GM12878 (cell line): ENCODE measurements at regions of chr18 and their contacts with region 1.

Region 1: DNA sequence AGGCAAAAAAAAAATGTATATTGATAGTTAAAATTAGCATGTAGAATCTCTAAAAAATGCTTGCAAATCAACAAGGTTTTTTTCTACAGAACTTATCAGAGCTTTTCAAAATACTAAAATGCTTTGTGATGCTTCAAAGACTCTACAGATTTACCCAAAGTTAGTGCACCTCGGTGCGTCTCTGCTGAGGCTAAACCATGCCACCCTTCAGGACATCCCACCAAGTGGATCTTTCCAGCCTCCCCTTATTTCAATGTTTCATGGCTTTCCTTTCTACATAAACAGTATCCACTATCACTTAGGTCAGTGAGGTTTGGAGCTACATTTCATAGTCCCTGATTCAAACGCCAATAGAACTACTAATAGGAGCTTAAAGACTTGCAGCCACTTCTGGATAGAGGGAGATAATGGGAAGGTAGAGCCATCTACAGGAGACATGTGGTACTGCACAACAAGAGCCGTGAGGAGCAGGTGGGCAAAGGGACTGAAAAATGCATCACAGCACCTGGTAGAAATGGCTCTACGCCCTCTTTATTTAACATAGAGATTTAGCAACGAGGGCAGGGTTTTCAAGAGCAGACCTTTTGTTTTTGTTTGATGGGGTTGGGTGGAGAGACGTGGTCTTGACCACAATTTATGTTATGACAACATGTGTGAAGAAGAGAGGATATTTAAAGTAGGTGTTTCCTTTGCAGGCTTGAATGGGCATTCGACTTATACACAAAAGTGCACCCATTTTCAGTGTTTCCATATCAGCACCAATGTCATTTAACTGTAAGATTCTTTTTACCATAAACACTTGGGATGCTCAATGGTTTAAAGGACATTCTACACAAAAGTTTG is 56.1 kb upstream of the SLC35G4 start:
- DNase-seq: no peak
- ATAC-seq: peak; percentile 90
- H3K4me3 ChIP-seq: no peak overlapping the region
- H3K27ac ChIP-seq: no peak overlapping the region
- H3K4me1 ChIP-seq: no peaks in the 10 kb centered on the region
- H3K27me3 ChIP-seq: peaks cover 2 to 3% of the 10 kb centered on the region in 2 experiments; a peak in 3 of 4 replicates
- CTCF ChIP-seq: peak; percentile 83 to 91 (median 91)
- EP300 ChIP-seq: no peak
- POLR2A ChIP-seq: no peak
- RAD21 ChIP-seq: peak; percentile 87

Region 2: DNA sequence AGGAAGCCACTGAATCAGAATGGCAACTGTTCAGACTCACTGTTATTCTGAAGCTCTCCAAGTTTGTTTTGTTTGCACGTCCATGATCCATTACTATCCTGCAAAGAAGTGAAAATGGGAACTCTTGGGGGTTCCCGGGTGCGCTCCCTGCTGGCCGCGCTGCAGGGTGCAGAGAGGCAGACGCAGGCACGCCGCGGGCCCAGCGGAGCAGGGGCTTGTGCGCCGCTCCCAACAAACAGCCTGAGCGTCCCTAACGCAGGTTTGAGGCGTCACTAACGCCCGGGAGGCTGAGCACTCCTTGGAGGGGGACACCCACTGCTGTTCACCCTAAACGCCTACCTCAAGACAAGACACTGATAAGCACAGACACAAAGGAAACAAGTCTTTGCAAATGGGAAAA is 389.7 kb before region 1 on chr18:
- CTCF ChIA-PET with region 1: interaction called, 6 read pairs
- POLR2A ChIA-PET with region 1: no interaction called
- RAD21 ChIA-PET with region 1: interaction called, 3 read pairs
- SMC1A ChIA-PET with region 1: interaction called, 5 read pairs
- in situ Hi-C with region 1: no loop called
- intact Hi-C with region 1: loop called (anchors 5 kb)
- DNase-seq: no peak
- ATAC-seq: peak; percentile 94
- H3K4me3 ChIP-seq: no peak overlapping the region
- H3K27ac ChIP-seq: no peak overlapping the region
- H3K4me1 ChIP-seq: peaks cover 9% of the 10 kb centered on the region
- H3K27me3 ChIP-seq: no peaks in the 10 kb centered on the region
- CTCF ChIP-seq: peak; percentile 61 to 88 (median 62)
- EP300 ChIP-seq: no peak
- POLR2A ChIP-seq: no peak
- RAD21 ChIP-seq: peak; percentile 25; the same call in 1 of the 2 replicates

Region 3: DNA sequence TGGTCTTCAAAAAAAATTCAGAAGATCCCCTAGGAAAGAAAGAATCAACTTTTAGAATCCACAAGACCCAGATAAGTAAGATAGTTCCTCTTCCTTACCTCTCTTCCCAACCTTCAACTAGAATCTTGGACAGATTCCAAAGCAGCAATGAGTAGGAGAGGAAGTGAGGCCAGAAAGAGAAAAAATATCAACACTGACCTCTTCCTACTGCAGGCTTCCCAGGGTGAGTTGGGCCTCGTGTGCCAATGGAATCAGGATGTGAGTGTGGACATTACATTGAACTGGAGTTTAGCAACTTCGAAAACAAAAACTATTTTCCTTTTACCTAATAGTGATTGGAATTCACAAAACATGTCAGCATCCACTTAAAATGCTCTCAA is 301.4 kb before region 1 on chr18:
- CTCF ChIA-PET with region 1: no interaction called
- POLR2A ChIA-PET with region 1: no interaction called
- RAD21 ChIA-PET with region 1: no interaction called
- SMC1A ChIA-PET with region 1: no interaction called
- in situ Hi-C with region 1: no loop called
- intact Hi-C with region 1: no loop called
- DNase-seq: no peak
- ATAC-seq: no peak
- H3K4me3 ChIP-seq: no peak overlapping the region
- H3K27ac ChIP-seq: no peak overlapping the region
- H3K4me1 ChIP-seq: no peaks in the 10 kb centered on the region
- H3K27me3 ChIP-seq: no peaks in the 10 kb centered on the region; a peak in 1 of 4 replicates
- CTCF ChIP-seq: no peak
- EP300 ChIP-seq: no peak
- POLR2A ChIP-seq: no peak
- RAD21 ChIP-seq: no peak

Region 4: DNA sequence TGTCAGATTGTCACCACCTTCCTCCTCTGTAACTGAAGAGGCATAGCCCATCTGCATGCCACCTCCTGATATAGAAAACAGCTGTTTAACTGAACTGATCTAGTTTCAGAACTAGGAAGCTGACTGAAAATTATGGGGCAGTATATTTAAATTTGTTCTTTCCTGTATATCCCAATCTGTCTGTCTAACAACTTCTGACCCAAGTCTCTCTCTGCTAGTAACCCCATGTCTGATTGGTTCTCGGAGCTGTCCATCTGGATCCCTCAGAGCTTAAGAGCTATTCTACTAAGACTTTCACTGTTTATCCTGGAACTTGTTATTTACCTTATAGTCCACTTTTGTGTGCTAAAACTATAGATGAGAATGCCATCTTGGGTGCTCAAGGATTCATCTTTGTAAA is 12.1 kb before region 1 on chr18:
- CTCF ChIA-PET with region 1: interaction called, 21 read pairs
- POLR2A ChIA-PET with region 1: no interaction called
- RAD21 ChIA-PET with region 1: no interaction called
- SMC1A ChIA-PET with region 1: interaction called, 3 read pairs
- in situ Hi-C with region 1: no loop called
- intact Hi-C with region 1: no loop called
- DNase-seq: no peak
- ATAC-seq: no peak
- H3K4me3 ChIP-seq: no peak overlapping the region
- H3K27ac ChIP-seq: no peak overlapping the region
- H3K4me1 ChIP-seq: no peaks in the 10 kb centered on the region
- H3K27me3 ChIP-seq: no peaks in the 10 kb centered on the region
- CTCF ChIP-seq: no peak
- EP300 ChIP-seq: no peak
- POLR2A ChIP-seq: no peak
- RAD21 ChIP-seq: no peak

Region 5: GRCh38 chr18:11719621-11720020 is 166.3 kb after region 1 on chr18:
- CTCF ChIA-PET with region 1: no interaction called
- POLR2A ChIA-PET with region 1: no interaction called
- RAD21 ChIA-PET with region 1: no interaction called
- SMC1A ChIA-PET with region 1: no interaction called
- in situ Hi-C with region 1: no loop called
- intact Hi-C with region 1: no loop called
- DNase-seq: no peak
- ATAC-seq: no peak
- H3K4me3 ChIP-seq: no peak overlapping the region
- H3K27ac ChIP-seq: no peak overlapping the region
- H3K4me1 ChIP-seq: no peaks in the 10 kb centered on the region
- H3K27me3 ChIP-seq: no peaks in the 10 kb centered on the region
- CTCF ChIP-seq: no peak
- EP300 ChIP-seq: no peak
- POLR2A ChIP-seq: no peak
- RAD21 ChIP-seq: no peak